PC-9 (cell line): ENCODE measurements at regions of chr17 and their contacts with region 1.

Region 1: GRCh38 chr17:3773511-3773910 is 27.5 kb downstream of the ITGAE start:
- DNase-seq: peak in 1 of 2 experiments; percentile 17
- H3K4me3 ChIP-seq: no peak overlapping the region
- H3K27ac ChIP-seq: no peak overlapping the region
- H3K4me1 ChIP-seq: 0 out of 2 replicates have a peak, but pooled peaks cover 8% of the 10 kb centered on the region
- H3K27me3 ChIP-seq: no peaks in the 10 kb centered on the region
- CTCF ChIP-seq: no peak

Region 2: GRCh38 chr17:2323629-2324314 is 1449.7 kb before region 1 on chr17:
- CTCF ChIA-PET with region 1: interaction called, 16 read pairs
- POLR2A ChIA-PET with region 1: no interaction called
- intact Hi-C with region 1: no loop called
- DNase-seq: no peak
- H3K4me3 ChIP-seq: no peak overlapping the region
- H3K27ac ChIP-seq: no peak overlapping the region
- H3K4me1 ChIP-seq: no peaks in the 10 kb centered on the region
- H3K27me3 ChIP-seq: no peaks in the 10 kb centered on the region
- CTCF ChIP-seq: no peak